SK-N-SH (cell line): ENCODE measurements at regions of chr16 and their contacts with region 1.

Region 1: DNA sequence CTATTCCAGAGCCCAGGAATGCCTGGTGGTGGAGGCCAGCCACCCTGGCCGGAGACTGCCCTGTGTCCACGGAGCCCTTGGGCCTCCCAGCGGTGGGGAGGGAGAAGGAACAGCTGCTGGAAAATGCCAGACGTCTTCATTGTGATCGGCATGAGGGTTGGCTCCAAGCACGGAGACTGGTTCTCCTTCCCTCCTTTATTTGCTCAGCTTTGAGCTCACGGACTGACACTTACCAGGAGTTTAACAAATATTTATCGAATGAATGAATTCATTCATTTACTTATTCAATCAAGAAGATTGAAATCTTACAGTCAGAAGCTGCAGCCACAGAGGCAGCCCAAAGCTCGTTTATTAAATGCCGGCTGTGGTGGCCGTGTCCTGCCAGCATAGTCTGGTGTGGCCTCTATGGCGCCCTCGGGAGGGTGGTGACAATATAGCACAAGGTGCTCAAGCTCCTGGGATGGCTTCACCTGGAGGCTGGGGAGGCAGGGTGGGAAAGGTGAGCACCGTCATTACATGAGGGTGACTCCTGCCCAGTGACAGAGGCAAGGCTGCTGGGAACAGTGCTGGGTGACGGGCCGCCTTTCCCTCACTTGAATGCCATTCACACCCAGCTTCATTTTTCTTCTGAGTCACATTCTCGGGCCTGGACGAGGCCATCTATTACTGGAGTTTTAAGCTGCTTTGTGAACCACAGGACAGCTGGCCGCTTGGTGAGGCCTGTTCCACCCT is 31.0 kb upstream of the JPH3 start:
- DNase-seq: peak; percentile 71
- H3K4me3 ChIP-seq: no peak overlapping the region
- H3K27ac ChIP-seq: no peak overlapping the region; a peak in 1 of 4 replicates
- H3K4me1 ChIP-seq: peaks cover 0 to 21% of the 10 kb centered on the region in 2 experiments; a peak in 1 of 4 replicates
- H3K27me3 ChIP-seq: no peaks in the 10 kb centered on the region; the same call in 1 of the 2 replicates
- CTCF ChIP-seq: peak; percentile 37
- EP300 ChIP-seq: no peak
- RAD21 ChIP-seq: peak; percentile 40

Region 2: DNA sequence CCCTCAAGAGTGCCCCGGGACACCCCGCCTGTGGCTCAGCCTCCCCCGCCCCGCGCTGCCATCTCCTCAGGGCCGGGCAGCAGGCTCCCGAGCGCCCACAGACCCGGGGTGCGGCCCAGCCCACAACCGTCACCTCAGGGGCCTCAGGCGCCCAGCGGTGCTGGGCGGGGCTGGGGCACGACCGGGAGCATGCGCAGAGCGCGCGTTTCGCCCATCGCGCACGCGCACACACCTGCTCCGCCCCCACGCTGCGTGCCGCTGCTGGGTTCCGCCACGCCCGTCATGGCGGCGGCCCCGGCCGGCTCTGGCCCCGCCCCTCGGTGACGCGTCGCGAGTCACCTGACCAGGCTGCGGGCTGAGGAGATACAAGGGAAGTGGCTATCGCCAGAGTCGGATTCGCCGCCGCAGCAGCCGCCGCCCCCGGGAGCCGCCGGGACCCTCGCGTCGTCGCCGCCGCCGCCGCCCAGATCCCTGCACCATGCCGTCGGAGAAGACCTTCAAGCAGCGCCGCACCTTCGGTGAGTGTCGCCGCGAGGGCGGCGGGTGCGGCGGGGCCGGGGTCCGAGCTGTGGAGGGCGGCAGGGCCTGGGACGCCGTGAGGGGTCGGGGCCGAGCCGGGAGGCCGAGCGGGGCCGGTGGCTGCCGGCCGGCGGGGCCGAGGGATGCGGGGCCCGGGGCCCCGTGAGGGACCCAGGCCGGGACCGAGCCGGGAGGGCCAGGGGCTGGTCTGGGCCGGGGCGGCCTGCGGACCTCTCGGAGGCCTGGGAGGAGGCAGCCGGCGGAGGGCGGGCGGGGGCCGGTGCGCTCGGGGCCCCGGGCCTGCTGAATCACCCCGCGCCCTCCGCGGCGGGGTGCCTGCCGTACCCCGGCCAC is 179.1 kb before region 1 on chr16 and contains the start of gene MAP1LC3B:
- CTCF ChIA-PET with region 1: interaction called, 14 read pairs
- POLR2A ChIA-PET with region 1: no interaction called
- DNase-seq: peak; percentile 98
- H3K4me3 ChIP-seq: peak within 1 kb of the TSS; percentile 78 to 79
- H3K27ac ChIP-seq: peak within 1 kb of the TSS; percentile 74 to 93
- H3K4me1 ChIP-seq: peaks cover 19 to 27% of the 10 kb centered on the region in 2 experiments
- H3K27me3 ChIP-seq: no peaks in the 10 kb centered on the region
- CTCF ChIP-seq: no peak
- EP300 ChIP-seq: no peak
- RAD21 ChIP-seq: no peak
- polyA plus RNA-seq, gene MAP1LC3B: 33.7 and 36.9 TPM in 2 replicates

Region 3: DNA sequence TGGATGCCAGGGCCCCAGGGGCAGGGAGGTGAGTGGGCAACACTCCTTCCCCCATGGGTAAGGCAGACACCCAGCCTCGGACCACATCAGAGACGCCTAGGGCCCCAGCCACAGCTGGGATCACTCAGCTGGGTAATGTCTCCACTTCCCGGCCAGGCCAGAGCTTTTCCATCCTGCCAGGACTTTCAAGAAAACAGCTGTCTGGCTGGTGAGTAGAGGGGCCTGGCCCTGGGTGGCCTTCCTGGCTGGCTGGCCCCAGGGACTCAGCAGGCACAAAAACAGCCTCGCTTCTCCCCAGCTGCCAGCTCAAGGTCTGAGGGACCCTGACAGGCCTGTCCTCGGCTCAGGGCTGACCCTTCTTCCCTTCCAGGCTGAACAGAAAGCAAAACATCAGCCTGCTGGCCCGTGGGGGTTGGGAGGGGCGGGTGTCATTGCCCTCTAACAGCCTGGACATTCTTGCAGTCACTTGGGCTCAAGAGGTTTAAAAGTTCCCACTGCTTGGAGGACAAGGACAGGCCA is 14.3 kb before region 1 on chr16:
- CTCF ChIA-PET with region 1: interaction called, 15 read pairs
- POLR2A ChIA-PET with region 1: interaction called, 4 read pairs
- DNase-seq: peak; percentile 90
- H3K4me3 ChIP-seq: no peak overlapping the region
- H3K27ac ChIP-seq: peak overlapping the region in 1 of 2 experiments; percentile 90; a peak in 2 of 4 replicates
- H3K4me1 ChIP-seq: peaks cover 0 to 17% of the 10 kb centered on the region in 2 experiments; a peak in 1 of 4 replicates
- H3K27me3 ChIP-seq: no peaks in the 10 kb centered on the region
- CTCF ChIP-seq: no peak
- EP300 ChIP-seq: no peak
- RAD21 ChIP-seq: 0 out of 2 replicates have a peak, but pooled peaks have one; percentile 12

Region 4: GRCh38 chr16:87581833-87582203 is 10.5 kb after region 1 on chr16:
- CTCF ChIA-PET with region 1: interaction called, 26 read pairs
- POLR2A ChIA-PET with region 1: interaction called, 3 read pairs
- DNase-seq: peak; percentile 58
- H3K4me3 ChIP-seq: peak overlapping the region in 1 of 2 experiments; percentile 50; a peak in 1 of 4 replicates
- H3K27ac ChIP-seq: peak overlapping the region; percentile 48 to 99; a peak in 3 of 4 replicates
- H3K4me1 ChIP-seq: peaks cover 14 to 19% of the 10 kb centered on the region in 2 experiments; a peak in 3 of 4 replicates
- H3K27me3 ChIP-seq: no peaks in the 10 kb centered on the region
- CTCF ChIP-seq: no peak
- EP300 ChIP-seq: peak in 1 of 2 experiments; percentile 75; a peak in 1 of 4 replicates
- RAD21 ChIP-seq: no peak